ENCODE measurements at regions of chr19 and their contacts with region 1.

Region 1: GRCh38 chr19:41753936-41754529 is 1.3 kb upstream of the CEACAM6 start:
- DNase-seq: peak; percentile 39 to 70 (median 65)
- H3K4me3 ChIP-seq: no peak overlapping the region
- H3K27ac ChIP-seq: no peak overlapping the region
- H3K4me1 ChIP-seq: peaks cover 3 to 16% (median 8%) of the 10 kb centered on the region in 4 experiments
- H3K27me3 ChIP-seq: peaks cover 0 to 2% (median 0%) of the 10 kb centered on the region in 5 experiments

Region 2: GRCh38 chr19:41706741-41707501 is 47.1 kb before region 1 on chr19:
- CTCF ChIA-PET with region 1: interaction called, 34 read pairs
- POLR2A ChIA-PET with region 1: no interaction called
- DNase-seq: peak; percentile 82 to 86 (median 86)
- H3K4me3 ChIP-seq: peak overlapping the region in 6 of 7 experiments; percentile 4 to 67 (median 50)
- H3K27ac ChIP-seq: no peak overlapping the region
- H3K4me1 ChIP-seq: peaks cover 0 to 2% (median 0%) of the 10 kb centered on the region in 4 experiments
- H3K27me3 ChIP-seq: peaks cover 0 to 13% (median 7%) of the 10 kb centered on the region in 5 experiments

Region 3: GRCh38 chr19:41775360-41775695 is 21.3 kb after region 1 on chr19:
- CTCF ChIA-PET with region 1: interaction called, 43 read pairs
- POLR2A ChIA-PET with region 1: no interaction called
- DNase-seq: no peak
- H3K4me3 ChIP-seq: no peak overlapping the region
- H3K27ac ChIP-seq: no peak overlapping the region
- H3K4me1 ChIP-seq: peaks cover 0 to 12% (median 7%) of the 10 kb centered on the region in 4 experiments
- H3K27me3 ChIP-seq: no peaks in the 10 kb centered on the region

Region 4: DNA sequence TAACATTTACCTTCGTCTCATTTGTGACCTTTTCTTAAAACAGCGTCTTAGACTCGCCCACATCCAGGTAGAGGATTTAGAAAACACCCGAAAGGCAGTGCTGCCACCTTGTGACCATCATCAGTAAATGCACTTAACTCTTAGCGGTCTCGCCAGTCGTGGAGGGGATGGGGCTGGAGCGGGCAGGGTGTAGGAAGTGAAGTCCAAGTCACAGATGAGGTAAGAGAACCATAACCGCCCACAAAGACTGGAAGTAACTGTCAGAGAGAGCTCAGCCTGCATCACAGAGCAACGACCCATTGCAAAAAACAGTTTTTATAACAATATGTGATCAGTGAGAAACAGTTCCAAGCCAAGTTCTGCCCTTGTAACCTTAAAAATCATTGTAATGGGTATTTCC is 31.6 kb after region 1 on chr19:
- CTCF ChIA-PET with region 1: interaction called, 124 read pairs
- POLR2A ChIA-PET with region 1: interaction called, 7 read pairs
- DNase-seq: peak; percentile 94 to 97 (median 96)
- H3K4me3 ChIP-seq: peak overlapping the region in 6 of 7 experiments; percentile 38 to 66 (median 59)
- H3K27ac ChIP-seq: no peak overlapping the region
- H3K4me1 ChIP-seq: peaks cover 8 to 38% (median 21%) of the 10 kb centered on the region in 4 experiments
- H3K27me3 ChIP-seq: no peaks in the 10 kb centered on the region

Region 5: GRCh38 chr19:41795031-41795461 is 41.0 kb after region 1 on chr19:
- CTCF ChIA-PET with region 1: interaction called, 46 read pairs
- POLR2A ChIA-PET with region 1: no interaction called
- DNase-seq: peak; percentile 45 to 71 (median 62)
- H3K4me3 ChIP-seq: no peak overlapping the region
- H3K27ac ChIP-seq: no peak overlapping the region
- H3K4me1 ChIP-seq: peaks cover 0 to 8% (median under 1%) of the 10 kb centered on the region in 4 experiments
- H3K27me3 ChIP-seq: no peaks in the 10 kb centered on the region

Measured in common myeloid progenitor, CD34-positive (primary cell).